ENCODE measurements at regions of chr1 and their contacts with region 1.

Region 1: GRCh38 chr1:112402682-112403643 is 6.9 kb downstream of the CTTNBP2NL start:
- DNase-seq: peak; percentile 81
- ATAC-seq: peak; percentile 49
- H3K4me3 ChIP-seq: no peak overlapping the region
- H3K27ac ChIP-seq: peak overlapping the region; percentile 95
- H3K4me1 ChIP-seq: peaks cover 27% of the 10 kb centered on the region
- H3K27me3 ChIP-seq: no peaks in the 10 kb centered on the region
- CTCF ChIP-seq: no peak
- POLR2A ChIP-seq: no peak
- RAD21 ChIP-seq: no peak

Region 2: GRCh38 chr1:112445596-112445995 is 42.6 kb after region 1 on chr1:
- CTCF ChIA-PET with region 1: interaction called, 3 read pairs
- POLR2A ChIA-PET with region 1: no interaction called
- dilution Hi-C with region 1: no loop called
- in situ Hi-C with region 1: no loop called
- intact Hi-C with region 1: loop called (anchors 5 kb)
- DNase-seq: peak; percentile 39
- ATAC-seq: peak; percentile 16; the same call in 1 of the 2 replicates
- H3K4me3 ChIP-seq: no peak overlapping the region
- H3K27ac ChIP-seq: no peak overlapping the region
- H3K4me1 ChIP-seq: peaks cover 12% of the 10 kb centered on the region
- H3K27me3 ChIP-seq: no peaks in the 10 kb centered on the region
- CTCF ChIP-seq: no peak
- POLR2A ChIP-seq: no peak
- RAD21 ChIP-seq: no peak

Region 3: DNA sequence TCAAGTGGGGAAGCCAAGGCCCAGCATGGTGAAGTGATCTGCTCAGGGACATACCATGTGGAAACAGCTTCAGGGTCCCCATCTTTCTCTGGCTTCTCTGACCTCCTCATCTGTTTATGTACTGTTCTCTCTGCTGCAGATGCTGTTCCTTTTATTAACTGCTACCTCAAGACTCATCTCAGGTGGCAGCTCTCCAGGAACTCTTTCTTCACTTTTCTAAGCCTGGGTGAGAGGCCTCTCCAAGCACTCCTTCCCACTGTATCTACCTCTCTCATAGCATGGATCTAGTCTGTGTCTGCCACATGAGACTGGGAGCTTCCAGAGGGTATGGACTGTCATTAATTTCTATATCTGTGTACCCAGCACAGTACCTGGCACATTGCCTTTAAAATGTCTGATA is 385.6 kb after region 1 on chr1:
- CTCF ChIA-PET with region 1: no interaction called
- POLR2A ChIA-PET with region 1: interaction called, 14 read pairs
- dilution Hi-C with region 1: no loop called
- in situ Hi-C with region 1: no loop called
- intact Hi-C with region 1: no loop called
- DNase-seq: peak; percentile 72
- ATAC-seq: peak; percentile 25; the same call in 1 of the 2 replicates
- H3K4me3 ChIP-seq: no peak overlapping the region
- H3K27ac ChIP-seq: no peak overlapping the region
- H3K4me1 ChIP-seq: no peaks in the 10 kb centered on the region
- H3K27me3 ChIP-seq: peaks cover 2% of the 10 kb centered on the region
- CTCF ChIP-seq: no peak
- POLR2A ChIP-seq: no peak
- RAD21 ChIP-seq: no peak

Region 4: GRCh38 chr1:113226148-113226547 is 823.2 kb after region 1 on chr1:
- CTCF ChIA-PET with region 1: no interaction called
- POLR2A ChIA-PET with region 1: no interaction called
- dilution Hi-C with region 1: no loop called
- in situ Hi-C with region 1: no loop called
- intact Hi-C with region 1: no loop called
- DNase-seq: no peak
- ATAC-seq: no peak
- H3K4me3 ChIP-seq: no peak overlapping the region
- H3K27ac ChIP-seq: no peak overlapping the region
- H3K4me1 ChIP-seq: no peaks in the 10 kb centered on the region
- H3K27me3 ChIP-seq: peaks cover 7% of the 10 kb centered on the region
- CTCF ChIP-seq: no peak
- POLR2A ChIP-seq: no peak
- RAD21 ChIP-seq: no peak